Uterus (tissue), 4 donors: ENCODE measurements at regions of chr1 and their contacts with region 1.

Region 1: DNA sequence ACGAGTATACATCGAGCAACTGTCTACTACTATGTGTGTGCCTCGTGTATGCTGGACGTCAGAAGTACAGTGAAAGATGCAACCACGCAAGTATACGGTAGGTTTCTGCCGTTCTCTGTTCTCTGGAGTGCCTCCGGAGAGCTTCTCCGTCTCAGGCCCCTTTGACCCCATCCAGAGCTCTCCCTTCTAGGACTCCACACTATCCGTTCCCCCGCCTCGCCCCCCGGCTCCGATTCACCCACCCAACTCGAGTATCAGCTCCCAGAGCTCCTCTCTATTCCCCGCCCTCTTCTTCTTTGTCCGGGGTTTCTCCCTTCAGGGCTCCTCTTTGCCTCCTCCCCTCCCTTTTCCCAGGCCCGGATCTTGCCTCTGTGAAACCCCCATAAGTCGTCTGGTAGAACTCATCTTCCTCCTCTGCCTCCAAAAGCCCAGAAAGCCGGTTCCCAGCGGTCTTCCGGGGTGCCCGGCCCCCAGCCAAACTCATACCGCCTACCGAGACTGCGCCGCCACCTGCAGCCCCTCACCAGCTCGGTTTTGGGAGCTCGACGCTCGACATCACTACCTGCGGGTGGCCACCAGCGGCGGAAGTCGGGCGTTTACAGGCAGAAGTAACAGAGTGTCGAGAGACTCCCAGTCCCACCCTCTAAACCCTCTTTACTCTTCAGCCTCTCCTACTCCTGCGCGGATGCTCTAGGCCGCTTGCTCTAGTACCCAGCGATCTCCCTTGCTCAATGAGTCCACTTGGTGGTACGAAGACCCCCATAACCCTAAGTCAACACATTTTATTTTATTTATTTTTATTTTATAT is at the start of gene VPS72:
- DNase-seq: peak; percentile 82
- H3K4me3 ChIP-seq: peak within 1 kb of the TSS; percentile 80 to 89
- H3K27ac ChIP-seq: peak within 1 kb of the TSS; percentile 82 to 88
- H3K4me1 ChIP-seq: peaks cover 6 to 12% of the 10 kb centered on the region in 2 donors
- H3K27me3 ChIP-seq: no peaks in the 10 kb centered on the region
- CTCF ChIP-seq: peak in 3 of 4 experiments; percentile 39 to 63 (median 44)
- POLR2A ChIP-seq: peak; percentile 48 to 58
- total RNA-seq, gene VPS72: 22.3 to 53.5 (median 32.7) TPM

Region 2: DNA sequence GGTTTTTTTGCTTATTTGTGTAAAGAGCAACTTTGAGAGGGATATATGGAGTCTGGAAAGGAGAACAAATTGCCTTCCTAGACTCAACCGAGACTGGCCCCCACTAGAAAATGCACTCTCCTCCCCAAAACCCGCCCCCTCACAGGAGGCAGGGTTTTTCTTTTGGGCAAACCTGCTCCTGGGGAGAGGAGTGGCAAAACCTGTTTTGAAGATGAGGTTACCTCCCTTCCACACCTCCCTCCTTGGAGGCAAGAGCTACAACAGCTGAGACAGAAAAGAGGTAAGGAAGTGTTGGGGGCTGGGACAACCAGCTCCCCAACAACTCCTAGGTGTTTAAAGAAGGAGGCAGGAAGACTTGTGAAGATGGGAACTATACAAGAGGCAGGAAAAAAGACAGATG is 153.5 kb before region 1 on chr1 and contains the start of gene BNIPL:
- intact Hi-C with region 1: no loop called
- DNase-seq: no peak
- H3K4me3 ChIP-seq: no peak within 1 kb of the TSS
- H3K27ac ChIP-seq: no peak within 1 kb of the TSS
- H3K4me1 ChIP-seq: no peaks in the 10 kb centered on the region
- H3K27me3 ChIP-seq: no peaks in the 10 kb centered on the region
- CTCF ChIP-seq: no peak
- POLR2A ChIP-seq: no peak
- total RNA-seq, gene BNIPL: 0.24 to 0.55 TPM in 2 of 4 donors, not detected in the others

Region 3: GRCh38 chr1:151340870-151341754 is 151.3 kb after region 1 on chr1:
- intact Hi-C with region 1: loop called (anchors 5 kb)
- DNase-seq: peak; percentile 32 to 53
- H3K4me3 ChIP-seq: no peak overlapping the region
- H3K27ac ChIP-seq: peak overlapping the region; percentile 26 to 49
- H3K4me1 ChIP-seq: peaks cover 0 to 4% of the 10 kb centered on the region in 2 donors
- H3K27me3 ChIP-seq: no peaks in the 10 kb centered on the region
- CTCF ChIP-seq: peak; percentile 71 to 91 (median 86)
- POLR2A ChIP-seq: no peak

Region 4: GRCh38 chr1:151547119-151547899 is 357.5 kb after region 1 on chr1:
- intact Hi-C with region 1: no loop called
- DNase-seq: peak; percentile 65 to 67
- H3K4me3 ChIP-seq: no peak overlapping the region
- H3K27ac ChIP-seq: peak overlapping the region; percentile 18 to 60
- H3K4me1 ChIP-seq: peaks cover 0 to 5% of the 10 kb centered on the region in 2 donors
- H3K27me3 ChIP-seq: no peaks in the 10 kb centered on the region
- CTCF ChIP-seq: no peak
- POLR2A ChIP-seq: peak in 1 of 2 donors; percentile 13